ENCODE measurements at regions of chr11 and their contacts with region 1.

Region 1: DNA sequence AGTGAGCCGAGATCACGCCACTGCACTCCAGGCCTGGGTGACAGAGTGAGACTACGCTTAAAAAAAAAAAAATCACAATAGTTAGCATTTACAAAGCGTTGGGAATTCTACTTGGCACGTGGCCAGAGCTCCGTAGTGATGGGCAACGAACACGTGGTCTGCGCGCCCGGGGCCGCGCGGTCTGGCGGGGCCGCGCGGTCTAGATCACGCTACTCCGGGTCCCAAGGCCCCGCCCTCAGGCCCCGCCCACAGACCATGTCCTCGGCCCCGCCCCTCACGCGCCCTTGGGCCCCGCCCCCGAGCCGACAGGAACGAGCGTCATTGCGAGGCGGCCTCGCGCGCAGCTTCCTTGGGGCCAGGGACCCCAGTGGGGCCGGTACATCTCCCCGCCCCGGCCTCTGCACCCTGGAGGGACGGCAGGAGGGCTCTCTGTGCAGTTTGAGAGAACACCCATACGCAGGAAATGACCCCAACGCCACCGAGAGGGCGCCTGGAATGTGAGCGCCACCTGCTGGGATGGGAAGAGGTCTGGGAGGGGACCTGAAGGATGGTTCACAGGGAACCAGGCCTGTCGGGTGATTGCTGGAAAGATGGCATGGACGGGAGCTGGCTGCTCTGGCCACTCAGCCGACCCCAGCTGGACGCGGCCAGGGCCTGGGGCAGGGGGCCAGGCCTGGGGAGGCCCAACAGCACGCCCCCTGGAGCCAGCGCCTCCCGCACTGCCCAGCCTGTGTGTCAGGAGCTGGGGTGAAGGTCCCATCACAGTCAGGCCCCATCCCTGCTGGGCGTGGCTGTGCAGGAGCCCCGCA is 2.0 kb upstream of the PTDSS2 start:
- DNase-seq: peak; percentile 9
- H3K4me3 ChIP-seq: peak overlapping the region; percentile 76
- CTCF ChIP-seq: peak; percentile 82

Region 2: DNA sequence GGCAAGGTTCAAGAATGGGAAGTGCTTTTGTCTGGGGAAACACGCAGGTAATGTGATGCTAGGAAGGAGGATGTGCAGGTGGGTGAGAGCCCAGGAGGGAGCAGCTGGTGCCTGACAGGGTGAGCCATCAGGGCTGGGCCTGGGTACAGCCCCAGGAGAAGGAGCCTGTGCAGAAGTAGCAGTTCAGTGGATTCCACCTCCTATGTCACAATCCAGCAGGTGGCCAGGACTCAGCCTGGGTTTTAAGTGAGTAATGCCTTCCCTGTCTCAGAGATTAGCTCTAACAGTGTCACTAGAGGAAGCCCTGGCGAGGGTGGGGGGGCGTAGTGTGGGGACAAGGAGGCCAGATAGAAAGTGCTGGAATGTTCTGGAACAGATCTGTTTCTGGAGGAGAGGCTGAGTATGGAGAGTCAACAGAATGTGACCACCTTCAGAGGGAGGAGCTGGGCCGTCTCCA is 232.5 kb before region 1 on chr11:
- CTCF ChIA-PET with region 1: interaction called, 10 read pairs
- POLR2A ChIA-PET with region 1: no interaction called
- DNase-seq: no peak
- H3K4me3 ChIP-seq: no peak overlapping the region
- CTCF ChIP-seq: no peak

Region 3: GRCh38 chr11:304915-305843 is 142.9 kb before region 1 on chr11:
- CTCF ChIA-PET with region 1: interaction called, 32 read pairs
- POLR2A ChIA-PET with region 1: no interaction called
- DNase-seq: peak; percentile 44
- H3K4me3 ChIP-seq: no peak overlapping the region; the same call in 1 of the 2 replicates
- CTCF ChIP-seq: peak; percentile 48

Region 4: DNA sequence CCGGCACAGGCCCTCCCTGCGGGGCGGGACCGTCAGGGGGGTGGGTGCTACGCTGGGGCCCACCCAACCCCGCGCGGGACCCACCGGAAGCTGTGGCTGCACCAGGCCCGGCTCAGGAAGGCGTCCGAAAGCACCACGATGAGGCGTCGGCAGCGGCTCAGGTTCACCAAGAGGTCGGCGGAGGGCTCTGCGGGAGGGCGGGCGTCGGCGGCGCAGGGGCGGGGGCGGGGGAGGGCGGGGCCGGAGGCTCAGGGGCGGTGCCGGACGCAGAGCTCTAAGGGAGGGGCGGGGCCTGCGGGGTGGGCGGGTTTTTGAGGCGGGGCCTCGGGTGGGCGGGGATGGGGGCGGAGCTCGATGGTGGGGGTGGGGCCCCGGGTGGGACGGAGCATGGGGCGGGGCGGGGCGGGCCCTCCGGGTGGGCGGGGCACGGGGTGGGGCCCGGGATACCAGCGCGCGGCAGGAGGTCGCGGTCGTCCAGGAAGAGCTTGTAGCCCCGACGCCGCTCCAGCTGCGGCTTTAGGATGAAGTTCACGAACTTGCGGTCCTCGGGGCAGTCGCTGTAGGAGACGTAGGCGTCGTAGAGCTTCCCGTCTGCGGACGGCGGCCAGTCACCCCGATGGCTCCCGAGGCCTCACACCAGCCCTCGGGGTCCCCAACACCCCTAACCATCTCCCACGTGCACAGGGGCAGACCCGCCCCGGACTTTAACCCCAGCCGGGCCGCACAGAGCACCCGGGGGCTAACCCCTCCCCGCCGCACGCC is 41.0 kb before region 1 on chr11:
- CTCF ChIA-PET with region 1: interaction called, 27 read pairs
- POLR2A ChIA-PET with region 1: no interaction called
- DNase-seq: no peak
- H3K4me3 ChIP-seq: peak overlapping the region; percentile 67
- CTCF ChIP-seq: no peak

Region 5: GRCh38 chr11:431921-432800 is 16.0 kb before region 1 on chr11:
- CTCF ChIA-PET with region 1: no interaction called
- POLR2A ChIA-PET with region 1: no interaction called
- DNase-seq: no peak
- H3K4me3 ChIP-seq: no peak overlapping the region
- CTCF ChIP-seq: no peak

Region 6: DNA sequence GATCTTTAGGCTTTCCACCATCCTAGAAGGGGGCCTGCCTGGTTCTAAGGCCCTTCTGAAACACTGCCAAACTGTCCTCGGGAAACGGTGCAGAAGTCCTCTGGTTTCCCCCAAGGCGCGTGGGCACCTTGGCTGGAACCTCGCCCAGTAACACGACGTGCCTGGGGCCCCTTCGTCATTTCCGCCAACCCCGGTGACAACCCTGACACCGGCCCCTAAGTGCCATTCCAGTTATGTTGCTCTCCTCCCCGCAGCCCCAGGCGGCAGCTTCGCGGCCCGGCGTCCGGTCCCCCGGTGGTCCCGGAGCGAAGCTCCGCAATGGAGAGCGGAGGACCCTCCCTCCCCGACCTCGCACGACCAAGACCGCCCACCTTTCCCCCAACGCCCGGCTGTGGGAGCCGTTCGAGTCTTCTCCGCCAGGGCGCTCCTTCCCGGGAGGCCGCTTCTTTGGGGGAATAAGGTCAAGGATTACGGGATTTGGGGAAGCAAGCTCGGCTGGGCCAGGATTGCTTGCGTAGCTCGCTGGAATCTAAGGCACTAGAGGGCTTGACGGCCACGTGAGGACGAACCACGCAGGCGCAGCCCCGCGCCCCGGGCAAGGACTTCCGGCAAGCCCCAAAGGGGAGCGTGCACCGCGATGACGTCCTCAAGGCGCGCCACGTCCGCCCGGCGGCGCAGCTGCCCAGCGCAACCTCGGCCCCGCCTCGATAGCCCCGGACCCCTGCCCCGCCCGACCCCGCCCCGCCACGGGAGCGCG is 58.3 kb after region 1 on chr11:
- CTCF ChIA-PET with region 1: interaction called, 11 read pairs
- POLR2A ChIA-PET with region 1: no interaction called
- DNase-seq: peak; percentile 87
- H3K4me3 ChIP-seq: peak overlapping the region; percentile 97
- CTCF ChIP-seq: peak; percentile 1